ENCODE measurements at regions of chr1 and their contacts with region 1.

Region 1: GRCh38 chr1:167913863-167914502 is at the start of gene ADCY10:
- DNase-seq: peak; percentile 44
- ATAC-seq: peak; percentile 48
- H3K4me3 ChIP-seq: 0 out of 6 replicates have a peak within 1 kb of the TSS, but pooled peaks of 1 of the 3 experiments have one; percentile 5
- H3K27ac ChIP-seq: peak within 1 kb of the TSS; percentile 36
- H3K4me1 ChIP-seq: peaks cover 54% of the 10 kb centered on the region
- H3K27me3 ChIP-seq: no peaks in the 10 kb centered on the region
- CTCF ChIP-seq: no peak
- EP300 ChIP-seq: peak in 1 of 2 experiments; percentile 70; a peak in 1 of 4 replicates
- POLR2A ChIP-seq: peak in 1 of 2 experiments; percentile 37; a peak in 1 of 4 replicates
- RAD21 ChIP-seq: no peak
- total RNA-seq, gene ADCY10: 0.02 and 0.03 TPM in 2 replicates

Region 2: GRCh38 chr1:167927046-167927754 is 13.2 kb after region 1 on chr1:
- CTCF ChIA-PET with region 1: no interaction called
- POLR2A ChIA-PET with region 1: interaction called, 15 read pairs
- in situ Hi-C with region 1: no loop called
- intact Hi-C with region 1: no loop called
- DNase-seq: no peak
- ATAC-seq: peak; percentile 58
- H3K4me3 ChIP-seq: peak overlapping the region; percentile 8 to 59 (median 31); a peak in 5 of 6 replicates
- H3K27ac ChIP-seq: peak overlapping the region; percentile 47
- H3K4me1 ChIP-seq: peaks cover 64% of the 10 kb centered on the region
- H3K27me3 ChIP-seq: no peaks in the 10 kb centered on the region
- CTCF ChIP-seq: no peak
- EP300 ChIP-seq: no peak
- POLR2A ChIP-seq: no peak
- RAD21 ChIP-seq: no peak

Region 3: DNA sequence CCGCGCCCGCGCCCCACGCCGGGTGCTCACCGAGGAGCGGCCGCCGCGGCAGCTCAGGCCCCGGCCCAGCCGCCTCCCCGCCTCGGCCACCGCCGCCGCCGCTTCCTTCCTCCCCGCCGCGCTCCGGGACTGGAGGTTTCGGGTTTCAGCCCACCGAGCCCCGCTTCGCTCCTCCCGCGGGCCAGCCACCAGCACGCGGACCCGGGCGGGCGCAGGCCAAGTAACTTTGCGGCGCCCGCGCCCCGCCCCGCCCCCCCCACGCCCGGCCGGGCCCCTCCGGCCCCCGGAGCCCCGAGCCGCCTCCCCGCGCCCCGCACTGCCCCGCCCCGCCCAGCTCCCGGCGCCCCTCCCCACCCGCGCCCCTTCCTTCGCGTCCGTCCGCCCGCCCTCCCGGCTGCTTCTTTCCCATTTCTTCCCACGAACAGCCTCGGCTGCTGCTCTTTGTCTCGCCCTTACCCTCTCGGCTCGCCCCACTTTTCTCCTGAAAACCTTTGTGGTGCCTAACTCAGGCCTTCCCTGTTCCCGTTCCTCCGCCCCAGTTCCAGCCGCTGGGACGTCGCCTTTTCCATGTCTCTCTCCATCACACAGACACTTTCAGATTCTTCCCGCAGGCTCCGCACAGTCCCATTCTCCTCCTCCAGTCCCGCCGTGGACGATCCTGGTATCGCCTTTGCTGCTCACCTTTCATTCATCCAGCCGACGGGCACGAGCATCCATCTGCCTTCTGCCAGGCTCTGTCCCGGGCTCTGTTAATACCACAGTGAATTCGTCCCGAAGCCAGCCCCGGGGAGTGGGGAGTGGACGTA is 222.9 kb after region 1 on chr1 and contains the start of gene GPR161:
- CTCF ChIA-PET with region 1: no interaction called
- POLR2A ChIA-PET with region 1: no interaction called
- in situ Hi-C with region 1: no loop called
- intact Hi-C with region 1: no loop called
- DNase-seq: no peak
- ATAC-seq: peak; percentile 73
- H3K4me3 ChIP-seq: peak within 1 kb of the TSS; percentile 57 to 71 (median 64)
- H3K27ac ChIP-seq: no peak within 1 kb of the TSS
- H3K4me1 ChIP-seq: peaks cover 16% of the 10 kb centered on the region
- H3K27me3 ChIP-seq: peaks cover 0 to 34% of the 10 kb centered on the region in 2 experiments; a peak in 4 of 5 replicates
- CTCF ChIP-seq: no peak
- EP300 ChIP-seq: no peak
- POLR2A ChIP-seq: no peak
- RAD21 ChIP-seq: no peak
- total RNA-seq, gene GPR161: 0.08 and 0.35 TPM in 2 replicates

Region 4: GRCh38 chr1:168421399-168422004 is 507.5 kb after region 1 on chr1:
- CTCF ChIA-PET with region 1: no interaction called
- POLR2A ChIA-PET with region 1: no interaction called
- in situ Hi-C with region 1: no loop called
- intact Hi-C with region 1: no loop called
- DNase-seq: no peak
- ATAC-seq: no peak
- H3K4me3 ChIP-seq: no peak overlapping the region
- H3K27ac ChIP-seq: no peak overlapping the region
- H3K4me1 ChIP-seq: no peaks in the 10 kb centered on the region
- H3K27me3 ChIP-seq: no peaks in the 10 kb centered on the region
- CTCF ChIP-seq: no peak
- EP300 ChIP-seq: no peak
- POLR2A ChIP-seq: no peak
- RAD21 ChIP-seq: no peak